Activated CD4-positive, alpha-beta T cell treated with anti-CD3 and anti-CD28 coated beads, Interleukin-2, amount 10 ng/mL, durations not matched to agents 7 days and 5 days (primary cell): ENCODE measurements at regions of chr3 and their contacts with region 1.

Region 1: DNA sequence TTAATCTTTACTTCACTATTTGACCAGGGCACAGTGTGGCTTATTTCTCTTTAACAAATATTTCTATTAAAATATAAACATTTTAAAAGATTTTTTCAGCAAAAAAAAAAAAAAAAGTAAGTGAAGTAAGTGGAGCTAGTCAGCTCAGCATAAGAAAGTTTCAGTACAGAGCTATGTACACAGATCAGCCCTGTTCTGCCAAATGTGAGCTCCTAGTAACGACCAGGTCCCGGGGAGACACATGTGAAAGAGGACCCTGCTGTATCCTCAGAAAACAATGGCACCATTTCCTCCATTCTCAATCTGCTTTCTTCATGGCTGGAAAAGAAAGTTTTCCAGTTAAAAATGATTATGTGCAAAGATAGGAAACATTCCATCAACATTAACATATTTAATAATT is 13.4 kb downstream of the CSTA start:
- DNase-seq: no peak
- H3K4me3 Mint-ChIP-seq: no peak overlapping the region
- H3K27ac Mint-ChIP-seq: no peak overlapping the region
- H3K4me1 Mint-ChIP-seq: no peaks in the 10 kb centered on the region
- H3K27me3 Mint-ChIP-seq: peaks cover 27% of the 10 kb centered on the region

Region 2: DNA sequence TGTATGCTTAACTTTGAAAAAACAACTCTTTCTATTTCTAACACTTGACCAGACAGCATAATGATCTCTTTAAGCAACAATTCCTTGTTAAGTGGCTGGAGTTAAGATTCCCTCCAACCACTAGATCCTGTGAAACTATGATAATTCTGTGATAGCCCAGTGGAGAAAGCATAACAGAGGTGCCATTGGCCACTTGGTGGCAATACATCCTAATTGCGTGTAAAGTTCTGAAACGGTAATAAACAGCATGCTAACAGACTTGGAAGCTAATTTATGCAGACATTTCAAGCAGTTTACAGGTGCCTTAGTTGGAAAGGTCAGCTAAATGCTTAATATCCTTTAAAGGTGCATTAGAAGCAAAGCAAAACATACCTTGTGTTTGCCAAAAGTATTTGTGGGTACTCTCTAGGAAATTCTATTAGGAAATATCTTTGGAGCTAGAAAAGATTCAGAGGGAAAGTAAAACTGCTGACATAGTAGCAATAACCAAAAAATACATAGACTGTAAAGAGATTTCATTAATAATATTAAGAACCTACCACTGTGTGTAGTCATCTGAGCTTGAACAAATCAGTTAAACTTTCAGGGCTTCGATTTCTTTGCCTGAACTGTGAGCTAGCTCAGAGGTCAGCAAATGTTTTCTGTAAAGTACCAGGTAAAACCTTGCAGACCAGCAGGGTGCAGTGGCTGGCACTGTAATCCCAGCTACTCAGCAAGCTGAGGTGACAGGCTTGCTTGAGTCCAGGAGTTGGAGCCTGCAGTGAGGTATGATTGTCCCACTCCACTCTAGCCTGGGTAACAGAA is 32.4 kb before region 1 on chr3:
- CTCF ChIA-PET with region 1: no interaction called
- POLR2A ChIA-PET with region 1: no interaction called
- DNase-seq: peak; percentile 10
- H3K4me3 Mint-ChIP-seq: no peak overlapping the region
- H3K27ac Mint-ChIP-seq: no peak overlapping the region
- H3K4me1 Mint-ChIP-seq: peaks cover 2% of the 10 kb centered on the region
- H3K27me3 Mint-ChIP-seq: peaks cover 22% of the 10 kb centered on the region

Region 3: DNA sequence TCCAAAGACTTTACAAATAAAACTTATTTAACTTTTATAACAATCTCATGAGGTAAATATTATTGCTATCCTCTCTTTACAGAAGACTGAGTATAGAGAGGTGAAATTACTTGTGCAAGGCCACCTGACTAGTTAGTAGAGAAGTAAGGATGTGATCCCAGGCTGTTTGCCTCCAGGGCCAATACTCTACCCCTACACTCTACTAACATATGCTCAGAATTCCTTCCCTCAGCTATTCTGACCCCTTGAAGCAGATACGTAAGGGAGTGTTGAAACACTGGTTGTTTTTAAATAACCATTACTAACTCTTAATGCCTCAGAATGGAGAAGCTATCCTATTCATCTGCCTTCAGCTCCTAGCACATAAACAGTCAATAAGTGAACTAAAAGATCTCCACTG is 10.8 kb after region 1 on chr3:
- CTCF ChIA-PET with region 1: interaction called, 12 read pairs
- POLR2A ChIA-PET with region 1: no interaction called
- DNase-seq: no peak
- H3K4me3 Mint-ChIP-seq: no peak overlapping the region
- H3K27ac Mint-ChIP-seq: no peak overlapping the region
- H3K4me1 Mint-ChIP-seq: no peaks in the 10 kb centered on the region
- H3K27me3 Mint-ChIP-seq: no peaks in the 10 kb centered on the region